ENCODE measurements at regions of chr6 and their contacts with region 1.

Region 1: DNA sequence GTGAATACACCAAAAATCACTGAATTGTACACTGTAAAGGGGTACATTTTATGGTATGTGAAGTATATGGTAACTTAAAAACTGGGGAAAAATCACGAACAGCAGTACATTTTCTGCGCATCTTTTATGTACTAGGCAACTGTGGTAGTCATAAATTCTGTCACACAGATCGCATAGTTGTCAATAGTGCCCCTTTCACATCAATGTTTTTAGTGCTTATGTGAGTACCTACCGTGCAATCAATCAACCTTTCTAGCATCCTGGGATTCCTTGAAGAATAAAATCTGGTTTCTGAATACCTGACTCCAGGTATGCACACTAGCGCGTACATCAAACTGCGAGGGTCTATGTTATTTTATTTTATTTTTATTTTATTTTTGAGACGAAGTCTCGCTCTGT is 637 bp upstream of the RPF2 start:
- DNase-seq: no peak
- ATAC-seq: no peak
- H3K4me3 Mint-ChIP-seq: peak overlapping the region; percentile 99
- H3K27ac Mint-ChIP-seq: peak overlapping the region; percentile 97
- H3K4me1 Mint-ChIP-seq: peaks cover 31% of the 10 kb centered on the region
- H3K27me3 Mint-ChIP-seq: no peaks in the 10 kb centered on the region

Region 2: DNA sequence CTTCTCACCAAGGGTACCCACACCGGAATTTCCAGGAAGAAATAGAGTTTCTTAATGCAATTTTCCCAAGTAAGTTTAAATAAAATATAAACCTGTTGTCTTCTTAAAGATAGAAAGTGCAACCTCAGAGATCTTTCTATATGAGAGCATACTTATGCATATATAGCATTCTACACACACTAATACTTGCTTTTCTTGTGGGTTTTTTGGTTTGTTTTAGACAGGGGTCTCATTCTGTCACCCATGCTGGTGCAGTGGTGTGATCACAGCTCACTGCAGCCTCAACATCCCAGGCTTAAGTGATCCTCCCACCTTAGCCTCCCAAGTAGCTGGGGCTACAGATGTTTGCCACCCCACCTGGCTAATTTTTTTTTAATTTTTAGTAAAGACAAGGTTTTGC is 90.9 kb before region 1 on chr6:
- CTCF ChIA-PET with region 1: no interaction called
- POLR2A ChIA-PET with region 1: no interaction called
- intact Hi-C with region 1: no loop called
- DNase-seq: no peak
- ATAC-seq: peak; percentile 42
- H3K4me3 Mint-ChIP-seq: no peak overlapping the region
- H3K27ac Mint-ChIP-seq: no peak overlapping the region
- H3K4me1 Mint-ChIP-seq: peaks cover 25% of the 10 kb centered on the region
- H3K27me3 Mint-ChIP-seq: no peaks in the 10 kb centered on the region

Region 3: GRCh38 chr6:110958329-110959192 is 22.6 kb before region 1 on chr6 and contains the start of gene GTF3C6:
- CTCF ChIA-PET with region 1: interaction called, 6 read pairs
- POLR2A ChIA-PET with region 1: interaction called, 4 read pairs
- intact Hi-C with region 1: loop called (anchors 1 to 2 kb)
- DNase-seq: peak; percentile 97
- ATAC-seq: peak; percentile 100
- H3K4me3 Mint-ChIP-seq: peak within 1 kb of the TSS; percentile 90
- H3K27ac Mint-ChIP-seq: peak within 1 kb of the TSS; percentile 97
- H3K4me1 Mint-ChIP-seq: peaks cover 14% of the 10 kb centered on the region
- H3K27me3 Mint-ChIP-seq: peaks cover 1% of the 10 kb centered on the region
- total RNA-seq, gene GTF3C6: 93.0 to 106 TPM

Region 4: GRCh38 chr6:110999634-111000270 is 18.6 kb after region 1 on chr6:
- CTCF ChIA-PET with region 1: interaction called, 3 read pairs
- POLR2A ChIA-PET with region 1: interaction called, 3 read pairs
- intact Hi-C with region 1: loop called in 1 of 2 experiments (anchors 2 kb)
- DNase-seq: no peak
- ATAC-seq: no peak
- H3K4me3 Mint-ChIP-seq: no peak overlapping the region
- H3K27ac Mint-ChIP-seq: no peak overlapping the region
- H3K4me1 Mint-ChIP-seq: peaks cover 4% of the 10 kb centered on the region
- H3K27me3 Mint-ChIP-seq: no peaks in the 10 kb centered on the region

Region 5: DNA sequence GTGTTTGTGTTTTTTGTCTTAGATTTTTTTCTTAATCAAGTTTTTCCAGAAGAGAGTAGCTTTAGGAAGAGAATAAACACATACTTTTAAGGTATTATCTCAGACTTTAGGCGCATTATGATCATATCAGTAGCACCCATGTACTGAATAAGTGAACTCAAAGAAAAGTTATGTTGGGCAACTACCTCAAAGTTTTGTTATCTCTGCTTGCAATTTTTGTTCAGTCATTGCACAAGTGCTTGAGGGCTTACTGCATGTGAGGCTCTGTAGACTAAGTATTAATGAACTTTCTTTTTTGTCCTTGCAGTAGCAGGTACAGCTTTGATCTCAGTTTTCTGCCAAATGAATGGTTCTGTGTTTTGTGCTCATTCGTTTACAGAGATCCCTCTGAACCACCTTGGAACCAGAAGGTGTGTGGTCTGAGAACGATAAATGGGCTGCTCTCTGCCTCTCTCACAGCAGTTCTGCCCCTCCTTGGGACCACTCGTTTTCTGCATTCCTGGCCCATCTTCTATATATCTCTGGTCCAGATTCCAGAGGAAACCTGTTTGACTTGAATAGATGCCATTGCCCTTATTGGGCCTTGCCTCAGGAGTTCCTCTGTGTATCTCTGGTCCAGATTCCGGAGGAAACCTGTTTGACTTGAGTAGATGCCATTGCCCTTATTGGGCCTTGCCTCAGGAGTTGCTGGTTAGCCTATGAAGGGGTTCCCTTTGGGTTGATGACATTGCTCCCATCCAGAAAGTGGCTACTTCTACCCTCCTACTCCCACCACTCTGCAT is 295.3 kb after region 1 on chr6:
- CTCF ChIA-PET with region 1: no interaction called
- POLR2A ChIA-PET with region 1: no interaction called
- intact Hi-C with region 1: no loop called
- DNase-seq: no peak
- ATAC-seq: no peak
- H3K4me3 Mint-ChIP-seq: no peak overlapping the region
- H3K27ac Mint-ChIP-seq: no peak overlapping the region
- H3K4me1 Mint-ChIP-seq: peaks cover 3% of the 10 kb centered on the region
- H3K27me3 Mint-ChIP-seq: no peaks in the 10 kb centered on the region